CD4-positive, alpha-beta memory T cell (primary cell): ENCODE measurements at regions of chrX and their contacts with region 1.

Region 1: DNA sequence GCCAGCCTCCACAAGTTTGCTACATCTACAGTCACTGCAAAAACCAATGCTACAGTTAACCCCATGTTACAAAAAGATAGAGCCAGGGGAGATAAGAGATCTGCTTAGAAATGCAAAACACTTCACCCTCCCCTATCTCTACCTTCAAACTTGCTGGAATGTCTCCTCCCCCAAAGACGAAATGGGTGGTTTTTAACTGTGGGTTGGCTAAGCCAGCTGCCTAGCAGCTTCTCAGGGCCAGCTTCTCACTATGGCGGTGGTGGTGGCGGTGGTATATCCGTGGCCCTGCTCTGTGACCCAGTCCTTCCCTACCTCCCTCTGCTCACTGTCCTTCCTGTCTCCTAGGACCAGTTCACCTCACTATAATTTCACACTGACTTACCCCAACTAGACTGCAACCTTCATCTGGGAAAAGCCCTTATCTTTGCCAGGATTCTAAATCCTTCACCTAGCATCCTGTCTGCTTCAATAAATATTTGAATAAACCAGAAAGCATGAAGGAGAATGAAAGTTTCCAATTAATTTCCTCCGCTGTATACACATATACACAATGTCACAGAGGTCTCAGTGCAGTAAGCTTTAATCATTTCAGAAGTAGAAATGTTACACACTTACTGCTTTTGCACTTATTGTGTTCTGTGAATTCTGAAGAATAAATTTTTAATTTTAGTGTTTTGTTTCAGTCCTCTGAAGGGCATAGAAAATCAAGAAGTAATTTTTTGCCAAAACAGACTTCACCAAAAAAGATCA is 46.3 kb downstream of the SH3KBP1 start:
- DNase-seq: peak; percentile 45 to 75 (median 51)
- H3K4me3 ChIP-seq: no peak overlapping the region
- H3K4me3 Mint-ChIP-seq: peak overlapping the region; percentile 1 to 78 (median 72)
- H3K27ac ChIP-seq: peak overlapping the region; percentile 36
- H3K27ac Mint-ChIP-seq: peak overlapping the region; percentile 58 to 93 (median 88)
- H3K4me1 ChIP-seq: peaks cover 54% of the 10 kb centered on the region
- H3K4me1 Mint-ChIP-seq: peaks cover 44 to 76% (median 53%) of the 10 kb centered on the region in 4 donors
- H3K27me3 ChIP-seq: no peaks in the 10 kb centered on the region
- H3K27me3 Mint-ChIP-seq: no peaks in the 10 kb centered on the region

Region 2: GRCh38 chrX:19747652-19748610 is 93.1 kb before region 1 on chrX:
- CTCF ChIA-PET with region 1: interaction called, 3 read pairs
- POLR2A ChIA-PET with region 1: interaction called, 20 read pairs
- intact Hi-C with region 1: loop called (anchors 2 kb)
- DNase-seq: peak; percentile 83 to 89 (median 85)
- H3K4me3 ChIP-seq: peak overlapping the region in 1 of 2 donors; percentile 4
- H3K4me3 Mint-ChIP-seq: peak overlapping the region; percentile 28 to 88 (median 68)
- H3K27ac ChIP-seq: peak overlapping the region; percentile 60
- H3K27ac Mint-ChIP-seq: peak overlapping the region; percentile 85 to 99 (median 97)
- H3K4me1 ChIP-seq: peaks cover 100% of the 10 kb centered on the region
- H3K4me1 Mint-ChIP-seq: peaks cover 63 to 99% (median 86%) of the 10 kb centered on the region in 4 donors
- H3K27me3 ChIP-seq: no peaks in the 10 kb centered on the region
- H3K27me3 Mint-ChIP-seq: no peaks in the 10 kb centered on the region

Region 3: DNA sequence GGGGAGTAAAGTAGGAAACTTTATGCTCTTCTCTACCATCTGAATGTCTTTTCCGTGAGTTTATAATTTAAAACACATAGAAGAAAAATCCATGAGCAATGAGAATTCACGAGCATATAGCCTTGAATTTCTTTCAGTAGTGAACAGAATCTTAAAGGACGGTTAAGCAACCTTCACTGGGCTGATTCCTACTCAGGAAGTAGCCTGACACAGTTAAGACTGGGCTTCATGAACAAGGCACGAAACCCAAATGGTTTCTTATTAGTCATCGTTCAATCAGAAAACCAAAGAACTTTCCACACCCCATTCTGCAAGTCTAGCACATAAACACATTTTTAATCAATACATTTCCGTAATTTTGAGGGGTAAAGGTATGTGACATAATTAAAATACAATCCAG is 49.5 kb before region 1 on chrX:
- CTCF ChIA-PET with region 1: interaction called, 4 read pairs
- POLR2A ChIA-PET with region 1: interaction called, 11 read pairs
- intact Hi-C with region 1: no loop called
- DNase-seq: peak in 2 of 5 donors; percentile 30 to 68
- H3K4me3 ChIP-seq: no peak overlapping the region
- H3K4me3 Mint-ChIP-seq: peak overlapping the region; percentile 33 to 89 (median 70)
- H3K27ac ChIP-seq: no peak overlapping the region
- H3K27ac Mint-ChIP-seq: peak overlapping the region; percentile 7 to 90 (median 73)
- H3K4me1 ChIP-seq: peaks cover 90% of the 10 kb centered on the region
- H3K4me1 Mint-ChIP-seq: peaks cover 45 to 81% (median 68%) of the 10 kb centered on the region in 4 donors
- H3K27me3 ChIP-seq: no peaks in the 10 kb centered on the region
- H3K27me3 Mint-ChIP-seq: no peaks in the 10 kb centered on the region

Region 4: GRCh38 chrX:19811807-19812604 is 29.1 kb before region 1 on chrX:
- CTCF ChIA-PET with region 1: interaction called, 10 read pairs
- POLR2A ChIA-PET with region 1: interaction called, 8 read pairs
- intact Hi-C with region 1: no loop called
- DNase-seq: no peak
- H3K4me3 ChIP-seq: no peak overlapping the region
- H3K4me3 Mint-ChIP-seq: peak overlapping the region in 4 of 8 donors; percentile 7 to 65 (median 22)
- H3K27ac ChIP-seq: no peak overlapping the region
- H3K27ac Mint-ChIP-seq: peak overlapping the region; percentile 57 to 84 (median 74)
- H3K4me1 ChIP-seq: peaks cover 54% of the 10 kb centered on the region
- H3K4me1 Mint-ChIP-seq: peaks cover 38 to 71% (median 56%) of the 10 kb centered on the region in 4 donors
- H3K27me3 ChIP-seq: no peaks in the 10 kb centered on the region
- H3K27me3 Mint-ChIP-seq: no peaks in the 10 kb centered on the region

Region 5: GRCh38 chrX:19855700-19856381 is 14.8 kb after region 1 on chrX:
- CTCF ChIA-PET with region 1: interaction called, 9 read pairs
- POLR2A ChIA-PET with region 1: interaction called, 24 read pairs
- intact Hi-C with region 1: no loop called
- DNase-seq: no peak
- H3K4me3 ChIP-seq: no peak overlapping the region
- H3K4me3 Mint-ChIP-seq: peak overlapping the region in 6 of 8 donors; percentile 54 to 86 (median 70)
- H3K27ac ChIP-seq: no peak overlapping the region
- H3K27ac Mint-ChIP-seq: peak overlapping the region; percentile 65 to 90 (median 82)
- H3K4me1 ChIP-seq: peaks cover 20% of the 10 kb centered on the region
- H3K4me1 Mint-ChIP-seq: peaks cover 20 to 37% (median 24%) of the 10 kb centered on the region in 4 donors
- H3K27me3 ChIP-seq: no peaks in the 10 kb centered on the region
- H3K27me3 Mint-ChIP-seq: no peaks in the 10 kb centered on the region